OCI-LY7 (cell line): ENCODE measurements at regions of chr17 and their contacts with region 1.

Region 1: GRCh38 chr17:4948931-4949320 is 596 bp upstream of the PFN1 start:
- DNase-seq: peak; percentile 93
- H3K4me3 ChIP-seq: peak overlapping the region; percentile 100
- H3K27ac ChIP-seq: peak overlapping the region; percentile 99
- H3K4me1 ChIP-seq: peaks cover 49% of the 10 kb centered on the region
- CTCF ChIP-seq: no peak

Region 2: GRCh38 chr17:4648741-4649140 is 300.2 kb before region 1 on chr17:
- CTCF ChIA-PET with region 1: no interaction called
- POLR2A ChIA-PET with region 1: no interaction called
- intact Hi-C with region 1: no loop called
- DNase-seq: no peak
- H3K4me3 ChIP-seq: no peak overlapping the region
- H3K27ac ChIP-seq: no peak overlapping the region
- H3K4me1 ChIP-seq: no peaks in the 10 kb centered on the region
- CTCF ChIP-seq: no peak

Region 3: DNA sequence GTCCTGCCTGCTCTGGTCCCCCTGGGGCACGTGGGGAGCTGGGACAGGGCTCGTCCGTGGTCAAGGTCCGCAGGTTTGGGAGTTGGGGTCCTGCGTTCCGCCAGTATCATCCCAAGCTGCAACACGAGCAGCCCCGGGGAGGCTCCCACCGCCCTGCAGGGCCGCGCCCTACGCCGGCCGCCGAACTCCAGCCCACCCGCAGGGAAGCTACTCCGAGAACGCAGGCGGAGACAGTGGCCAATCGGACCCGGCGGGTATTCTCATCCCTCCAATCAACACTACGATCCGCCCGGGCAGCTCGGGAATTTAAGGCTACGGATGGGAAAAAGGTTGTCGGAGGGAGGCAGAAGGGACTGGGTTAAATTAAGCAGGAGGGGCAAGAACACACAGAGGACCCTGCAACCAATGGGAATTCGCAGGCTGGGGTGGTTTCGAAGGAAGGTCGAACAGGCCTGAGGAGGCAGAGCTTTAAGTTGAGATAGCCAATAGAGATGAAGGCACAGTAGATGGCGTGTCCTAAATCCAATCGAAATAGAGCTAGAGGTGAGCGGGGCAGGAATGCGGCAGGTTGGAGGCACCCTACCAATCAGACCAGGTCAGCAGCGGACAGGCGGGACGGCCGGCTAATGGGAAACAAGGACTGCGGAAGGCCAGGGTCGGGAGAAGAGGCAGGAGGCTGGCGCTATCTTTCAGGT is 18.1 kb after region 1 on chr17:
- CTCF ChIA-PET with region 1: interaction called, 3 read pairs
- POLR2A ChIA-PET with region 1: interaction called, 51 read pairs
- intact Hi-C with region 1: loop called (anchors 1 kb)
- DNase-seq: peak; percentile 98
- H3K4me3 ChIP-seq: peak overlapping the region; percentile 78
- H3K27ac ChIP-seq: peak overlapping the region; percentile 77
- H3K4me1 ChIP-seq: peaks cover 23% of the 10 kb centered on the region
- CTCF ChIP-seq: no peak

Region 4: DNA sequence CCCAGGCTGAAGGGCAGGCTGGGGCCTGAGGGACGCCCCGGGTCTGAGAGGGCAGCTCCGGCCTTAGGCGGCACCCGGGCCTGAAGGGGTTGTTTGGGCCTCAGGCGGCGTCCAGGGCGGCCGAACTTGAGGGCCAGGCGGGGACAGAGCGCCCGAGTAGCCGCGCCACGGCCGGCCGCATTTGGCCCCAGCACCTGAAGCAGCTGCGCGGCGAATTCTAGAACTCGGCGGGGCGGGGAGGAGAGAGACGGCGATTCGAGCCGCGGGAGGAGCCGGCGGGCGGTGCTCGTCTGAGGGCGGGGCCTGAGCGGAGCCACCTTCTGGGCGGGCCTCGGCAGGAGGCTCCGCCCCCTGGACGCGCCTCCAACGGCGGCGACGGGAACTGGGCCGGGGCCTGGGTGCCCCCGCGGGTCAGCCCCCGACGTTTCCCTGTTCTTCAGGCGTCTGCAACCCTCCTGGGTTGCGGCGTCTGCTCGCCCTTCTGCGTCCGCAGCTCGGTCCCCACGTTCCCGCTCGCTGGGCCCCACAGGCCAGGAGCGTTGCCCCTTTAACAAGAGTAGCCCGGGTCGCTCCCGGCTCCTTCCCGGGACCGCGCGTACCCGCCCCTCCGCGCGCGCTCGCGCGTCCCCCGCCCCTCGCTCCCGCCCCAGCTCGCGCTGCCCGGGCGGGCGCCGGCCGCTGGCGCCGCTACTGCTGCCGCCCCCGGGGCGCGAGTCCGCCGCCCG is 48.5 kb after region 1 on chr17 and contains the starts of genes INCA1 and KIF1C:
- CTCF ChIA-PET with region 1: no interaction called
- POLR2A ChIA-PET with region 1: interaction called, 3 read pairs
- intact Hi-C with region 1: loop called (anchors 1 kb)
- DNase-seq: peak; percentile 95
- H3K4me3 ChIP-seq: peak within 1 kb of the TSS; percentile 93
- H3K27ac ChIP-seq: peak within 1 kb of the TSS; percentile 48
- H3K4me1 ChIP-seq: peaks cover 20% of the 10 kb centered on the region
- CTCF ChIP-seq: no peak
- total RNA-seq, gene INCA1: not detected in 2 replicates
- total RNA-seq, gene KIF1C: 20.6 and 32.1 TPM in 2 replicates